Posterior cingulate gyrus (tissue), 11 donors: ENCODE measurements at regions of chr11 and their contacts with region 1.

Region 1: GRCh38 chr11:111938687-111939160 is 1.6 kb downstream of the DIXDC1 start:
- DNase-seq: peak in 2 of 10 donors; percentile 26 to 80

Region 2: GRCh38 chr11:111977146-111978027 is 38.7 kb after region 1 on chr11:
- intact Hi-C with region 1: loop called (anchors 2 kb)
- DNase-seq: peak; percentile 62 to 94 (median 75)

Region 3: GRCh38 chr11:111983187-111983986 is 44.7 kb after region 1 on chr11:
- intact Hi-C with region 1: loop called (anchors 2 kb)
- DNase-seq: peak in 9 of 10 donors; percentile 38 to 95 (median 56)

Region 4: GRCh38 chr11:112086422-112087191 is 147.9 kb after region 1 on chr11 and contains the starts of genes SDHD and TIMM8B:
- intact Hi-C with region 1: loop called (anchors 5 kb)
- DNase-seq: peak; percentile 93 to 99 (median 96)